ENCODE measurements at regions of chr4 and their contacts with region 1.

Region 1: GRCh38 chr4:95124906-95125504 is 367.2 kb downstream of the BMPR1B start:
- DNase-seq: peak; percentile 76
- ATAC-seq: peak; percentile 89
- H3K4me3 ChIP-seq: no peak overlapping the region
- H3K27ac ChIP-seq: no peak overlapping the region
- H3K4me1 ChIP-seq: no peaks in the 10 kb centered on the region
- H3K27me3 ChIP-seq: no peaks in the 10 kb centered on the region
- CTCF ChIP-seq: peak; percentile 77
- POLR2A ChIP-seq: no peak
- RAD21 ChIP-seq: peak; percentile 80

Region 2: DNA sequence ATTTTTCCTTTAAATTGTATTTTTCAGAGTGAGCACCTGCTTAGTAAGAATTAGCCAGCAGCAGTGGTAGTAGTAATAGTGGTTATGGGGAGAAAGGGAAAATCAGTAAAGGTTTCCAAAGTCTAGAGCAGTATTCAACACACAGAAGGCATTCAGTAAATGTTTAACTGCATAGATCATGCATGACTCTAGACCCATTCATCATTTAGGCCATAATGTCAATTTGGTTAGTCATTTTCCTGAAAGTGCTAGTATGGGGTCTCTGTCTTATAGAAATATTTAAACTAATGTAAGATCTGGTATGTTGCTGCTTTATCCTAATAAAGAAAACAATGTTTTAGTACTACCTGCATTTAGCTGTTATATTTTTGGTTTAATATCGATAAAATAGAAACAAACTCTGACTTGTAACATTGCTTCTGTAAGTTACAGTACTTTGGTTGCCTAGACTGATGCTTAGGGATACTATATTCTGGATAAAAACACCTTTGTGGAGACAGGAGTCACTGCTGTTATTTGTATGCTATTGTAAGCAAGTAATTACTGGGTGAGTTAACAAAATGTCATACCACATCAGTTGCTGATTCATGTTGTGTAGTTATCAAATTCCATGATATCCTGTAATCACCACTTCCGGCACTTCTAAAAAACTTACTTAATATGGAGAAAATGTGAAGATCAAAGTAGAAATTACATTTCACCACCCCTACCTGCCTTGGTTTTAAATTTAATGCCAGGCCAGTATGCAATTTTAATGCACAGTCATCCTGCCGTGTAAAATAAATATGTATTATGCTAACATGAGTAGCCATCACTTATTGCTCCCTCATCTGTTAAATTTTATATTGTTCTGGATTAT is 483.1 kb before region 1 on chr4:
- CTCF ChIA-PET with region 1: no interaction called
- POLR2A ChIA-PET with region 1: no interaction called
- dilution Hi-C with region 1: loop called (anchors 25 kb)
- in situ Hi-C with region 1: no loop called
- intact Hi-C with region 1: no loop called
- DNase-seq: peak; percentile 78
- ATAC-seq: peak; percentile 83
- H3K4me3 ChIP-seq: no peak overlapping the region
- H3K27ac ChIP-seq: no peak overlapping the region
- H3K4me1 ChIP-seq: peaks cover 2% of the 10 kb centered on the region; the same call in 1 of the 2 replicates
- H3K27me3 ChIP-seq: no peaks in the 10 kb centered on the region
- CTCF ChIP-seq: no peak
- POLR2A ChIP-seq: no peak
- RAD21 ChIP-seq: no peak

Region 3: GRCh38 chr4:95243892-95244291 is 118.9 kb after region 1 on chr4:
- CTCF ChIA-PET with region 1: no interaction called
- POLR2A ChIA-PET with region 1: no interaction called
- dilution Hi-C with region 1: no loop called
- in situ Hi-C with region 1: no loop called
- intact Hi-C with region 1: no loop called
- DNase-seq: no peak
- ATAC-seq: no peak
- H3K4me3 ChIP-seq: no peak overlapping the region
- H3K27ac ChIP-seq: no peak overlapping the region
- H3K4me1 ChIP-seq: no peaks in the 10 kb centered on the region
- H3K27me3 ChIP-seq: no peaks in the 10 kb centered on the region
- CTCF ChIP-seq: no peak
- POLR2A ChIP-seq: no peak
- RAD21 ChIP-seq: no peak

Measured in IMR-90 (cell line).